HEK293 (cell line): ENCODE measurements at regions of chr6 and their contacts with region 1.

Region 1: GRCh38 chr6:136967876-136968752 is 46.0 kb downstream of the SLC35D3 start:
- H3K4me3 ChIP-seq: no peak overlapping the region
- H3K27ac ChIP-seq: no peak overlapping the region
- H3K4me1 ChIP-seq: no peaks in the 10 kb centered on the region
- CTCF ChIP-seq: peak; percentile 75

Region 2: GRCh38 chr6:136761227-136761922 is 206.7 kb before region 1 on chr6:
- CTCF ChIA-PET with region 1: no interaction called
- POLR2A ChIA-PET with region 1: no interaction called
- H3K4me3 ChIP-seq: no peak overlapping the region
- H3K27ac ChIP-seq: no peak overlapping the region
- H3K4me1 ChIP-seq: peaks cover 8% of the 10 kb centered on the region
- CTCF ChIP-seq: no peak

Region 3: DNA sequence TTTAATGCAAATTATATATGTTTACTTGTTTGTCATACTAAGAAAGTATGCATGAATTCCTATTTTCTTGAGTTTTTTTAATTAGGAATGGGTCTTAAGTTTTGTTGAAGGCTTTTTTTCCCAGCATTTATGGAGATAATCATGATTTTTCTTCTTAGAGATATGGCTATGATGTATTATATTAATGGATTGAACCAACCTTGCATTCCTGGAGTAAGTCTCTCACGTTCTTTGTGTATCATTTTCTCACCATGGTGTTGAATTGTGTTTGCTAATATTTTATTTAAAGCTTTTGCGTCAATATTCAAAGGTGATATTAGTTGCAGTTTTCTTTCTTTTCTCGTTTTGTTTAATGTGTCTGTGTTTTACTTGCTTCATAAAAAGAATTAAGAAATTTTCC is 94.4 kb before region 1 on chr6:
- CTCF ChIA-PET with region 1: no interaction called
- POLR2A ChIA-PET with region 1: no interaction called
- H3K4me3 ChIP-seq: no peak overlapping the region
- H3K27ac ChIP-seq: no peak overlapping the region
- H3K4me1 ChIP-seq: no peaks in the 10 kb centered on the region
- CTCF ChIP-seq: no peak

Region 4: DNA sequence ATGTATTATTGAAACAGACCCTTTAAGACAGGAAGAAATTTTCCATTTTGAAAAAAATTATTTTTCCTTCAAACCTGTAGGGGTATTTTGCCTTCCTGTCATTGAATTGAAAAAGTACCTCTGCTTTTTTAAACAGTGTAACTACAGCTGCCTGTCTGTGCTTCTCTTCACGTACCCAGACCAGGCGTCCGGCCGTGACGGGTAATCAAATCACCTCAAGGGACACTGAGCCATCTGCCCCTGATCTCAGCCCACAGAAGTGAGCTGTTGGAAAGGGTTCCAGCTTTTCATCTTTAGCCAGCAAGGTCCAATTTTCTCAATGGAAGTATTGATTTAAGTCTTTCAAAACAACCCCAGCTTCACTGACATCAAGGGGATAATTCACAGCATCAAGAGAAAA is 12.0 kb after region 1 on chr6:
- CTCF ChIA-PET with region 1: interaction called, 11 read pairs
- POLR2A ChIA-PET with region 1: no interaction called
- H3K4me3 ChIP-seq: no peak overlapping the region
- H3K27ac ChIP-seq: no peak overlapping the region
- H3K4me1 ChIP-seq: no peaks in the 10 kb centered on the region
- CTCF ChIP-seq: no peak

Region 5: GRCh38 chr6:137013738-137014602 is 45.9 kb after region 1 on chr6:
- CTCF ChIA-PET with region 1: interaction called, 39 read pairs
- POLR2A ChIA-PET with region 1: no interaction called
- H3K4me3 ChIP-seq: no peak overlapping the region
- H3K27ac ChIP-seq: no peak overlapping the region
- H3K4me1 ChIP-seq: no peaks in the 10 kb centered on the region
- CTCF ChIP-seq: no peak